Activated CD4-positive, alpha-beta memory T cell treated with anti-CD3 and anti-CD28 coated beads for 36 hours (primary cell): ENCODE measurements at regions of chr10 and their contacts with region 1.

Region 1: DNA sequence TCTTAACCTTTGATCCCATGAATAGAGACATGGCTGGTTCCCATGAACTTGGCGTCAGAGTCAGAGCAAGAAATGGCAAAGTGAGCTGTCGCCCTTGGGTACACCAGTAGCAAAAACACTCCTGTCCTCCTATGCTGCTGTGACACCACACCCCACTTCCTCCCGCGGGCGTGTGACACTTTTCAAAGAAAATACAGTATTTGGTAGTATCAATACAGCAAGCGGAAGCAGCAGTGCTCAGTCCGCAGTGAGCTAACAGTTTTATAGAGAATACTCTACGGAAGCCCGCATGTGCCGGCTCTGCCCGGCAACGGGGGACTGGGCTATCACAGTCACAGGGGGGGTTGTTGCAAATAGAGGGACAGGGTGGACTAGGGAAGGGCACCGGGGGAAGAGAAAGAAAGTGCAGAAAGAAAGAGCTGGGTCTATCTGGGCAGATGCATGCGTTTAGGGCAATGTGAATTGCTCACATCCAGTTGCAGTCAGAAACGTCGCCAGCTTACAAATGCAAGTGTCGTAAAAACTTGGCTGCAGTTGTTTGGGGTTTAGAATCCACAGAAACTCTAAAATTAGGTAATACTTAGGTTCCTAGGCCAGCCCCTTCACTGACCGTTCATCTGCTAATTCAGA is 49.8 kb downstream of the PRKCQ start:
- DNase-seq: peak; percentile 91
- H3K4me3 Mint-ChIP-seq: peak overlapping the region; percentile 82
- H3K27ac Mint-ChIP-seq: peak overlapping the region; percentile 98
- H3K4me1 Mint-ChIP-seq: peaks cover 88% of the 10 kb centered on the region
- H3K27me3 Mint-ChIP-seq: no peaks in the 10 kb centered on the region

Region 2: DNA sequence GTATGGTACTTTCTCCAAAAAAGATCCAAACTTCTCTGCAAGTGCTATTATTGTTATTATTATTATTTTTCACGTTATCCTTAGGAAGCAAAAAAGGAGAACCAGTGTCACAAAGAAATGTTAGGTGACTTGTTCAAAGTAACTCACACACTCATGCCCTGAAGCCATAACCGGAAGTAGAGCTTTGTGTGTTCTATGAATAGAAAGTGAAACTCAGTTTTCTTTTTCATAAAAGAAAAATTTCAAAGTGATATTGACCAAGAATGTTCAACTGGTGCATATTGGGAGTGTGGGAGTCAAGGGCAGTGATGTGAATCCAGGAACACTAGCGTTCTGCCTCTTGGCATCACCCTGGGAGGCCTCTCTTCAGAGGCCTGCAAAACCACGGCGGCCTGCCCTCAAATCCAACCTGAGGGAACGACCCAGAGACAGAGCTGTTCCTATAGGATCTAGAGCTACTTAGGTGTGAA is 56.4 kb before region 1 on chr10:
- CTCF ChIA-PET with region 1: no interaction called
- POLR2A ChIA-PET with region 1: no interaction called
- intact Hi-C with region 1: loop called (anchors 1 kb)
- DNase-seq: peak; percentile 54
- H3K4me3 Mint-ChIP-seq: peak overlapping the region; percentile 73
- H3K27ac Mint-ChIP-seq: peak overlapping the region; percentile 93
- H3K4me1 Mint-ChIP-seq: peaks cover 48% of the 10 kb centered on the region
- H3K27me3 Mint-ChIP-seq: no peaks in the 10 kb centered on the region

Region 3: GRCh38 chr10:6498771-6499170 is 31.6 kb before region 1 on chr10:
- CTCF ChIA-PET with region 1: interaction called, 4 read pairs
- POLR2A ChIA-PET with region 1: interaction called, 10 read pairs
- intact Hi-C with region 1: loop called (anchors 2 kb)
- DNase-seq: peak; percentile 55
- H3K4me3 Mint-ChIP-seq: peak overlapping the region; percentile 36
- H3K27ac Mint-ChIP-seq: peak overlapping the region; percentile 93
- H3K4me1 Mint-ChIP-seq: peaks cover 53% of the 10 kb centered on the region
- H3K27me3 Mint-ChIP-seq: no peaks in the 10 kb centered on the region

Region 4: GRCh38 chr10:6507311-6507710 is 23.0 kb before region 1 on chr10:
- CTCF ChIA-PET with region 1: interaction called, 3 read pairs
- POLR2A ChIA-PET with region 1: interaction called, 10 read pairs
- intact Hi-C with region 1: loop called (anchors 1 kb)
- DNase-seq: peak; percentile 73
- H3K4me3 Mint-ChIP-seq: no peak overlapping the region
- H3K27ac Mint-ChIP-seq: peak overlapping the region; percentile 88
- H3K4me1 Mint-ChIP-seq: peaks cover 76% of the 10 kb centered on the region
- H3K27me3 Mint-ChIP-seq: no peaks in the 10 kb centered on the region

Region 5: DNA sequence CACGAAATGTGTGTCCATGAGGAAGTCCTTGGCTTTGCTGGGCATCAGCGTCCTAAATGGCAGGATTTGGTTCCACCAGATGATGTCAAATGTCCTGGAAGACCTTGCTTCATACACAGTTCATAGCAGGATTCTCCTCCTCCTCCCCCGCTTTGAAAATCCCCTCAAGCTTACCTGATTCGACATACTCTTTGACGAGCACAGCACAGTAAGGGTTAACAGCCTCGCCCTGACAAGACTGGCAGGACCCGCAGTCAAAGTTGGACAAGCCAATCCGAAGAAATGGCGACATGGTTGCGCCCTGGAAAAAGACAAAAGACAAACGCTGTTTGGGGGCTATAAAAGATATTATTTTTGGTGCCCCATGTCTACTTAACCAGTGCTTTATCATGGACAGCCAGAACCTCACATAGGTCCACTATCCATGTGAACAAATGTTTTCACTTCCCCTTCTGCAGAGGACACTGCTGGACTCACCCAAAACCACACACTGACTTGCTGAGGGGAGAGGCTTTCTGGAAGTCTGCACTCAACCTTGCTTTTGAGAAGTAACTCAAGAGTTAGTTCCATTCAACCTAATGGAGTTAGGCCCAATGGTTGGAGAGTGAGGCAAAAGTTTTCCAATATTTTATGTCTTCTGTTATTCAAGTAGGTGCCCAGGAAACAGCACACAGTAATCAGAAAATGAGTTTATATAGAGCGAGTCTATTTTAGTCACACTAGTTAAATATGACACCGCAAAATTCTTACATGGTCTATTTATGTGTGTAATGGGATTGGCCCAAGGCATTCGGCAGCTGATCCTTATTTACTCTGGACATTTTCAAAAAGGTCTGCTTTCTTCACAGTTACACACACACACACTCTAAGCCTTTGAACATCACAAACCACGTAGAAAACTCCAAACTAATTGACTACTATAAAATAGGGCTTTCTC is 15.2 kb before region 1 on chr10:
- CTCF ChIA-PET with region 1: interaction called, 8 read pairs
- POLR2A ChIA-PET with region 1: interaction called, 10 read pairs
- intact Hi-C with region 1: loop called (anchors 1 kb)
- DNase-seq: no peak
- H3K4me3 Mint-ChIP-seq: no peak overlapping the region
- H3K27ac Mint-ChIP-seq: peak overlapping the region; percentile 14
- H3K4me1 Mint-ChIP-seq: peaks cover 85% of the 10 kb centered on the region
- H3K27me3 Mint-ChIP-seq: no peaks in the 10 kb centered on the region

Region 6: DNA sequence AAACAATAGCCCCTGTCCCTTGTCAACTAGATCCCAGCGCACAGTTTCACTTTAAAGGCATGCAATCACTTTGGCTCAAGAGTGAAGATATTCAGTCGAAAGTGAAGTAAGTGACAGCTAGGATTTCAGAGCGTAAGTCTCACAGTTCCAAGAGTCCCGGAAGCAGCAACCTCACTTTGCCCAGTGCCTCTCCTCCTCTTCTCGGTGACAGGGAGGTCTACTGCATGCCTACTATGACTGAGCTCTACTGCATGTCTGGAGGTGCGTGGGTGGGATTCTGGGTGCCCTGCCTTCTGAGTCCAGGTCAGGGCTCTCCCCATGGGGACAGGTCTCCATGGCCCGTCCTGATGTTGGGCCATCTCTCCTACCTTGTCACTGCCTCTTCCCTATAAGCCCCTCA is 32.7 kb after region 1 on chr10:
- CTCF ChIA-PET with region 1: interaction called, 4 read pairs
- POLR2A ChIA-PET with region 1: interaction called, 6 read pairs
- intact Hi-C with region 1: loop called (anchors 1 kb)
- DNase-seq: peak; percentile 86
- H3K4me3 Mint-ChIP-seq: peak overlapping the region; percentile 72
- H3K27ac Mint-ChIP-seq: peak overlapping the region; percentile 91
- H3K4me1 Mint-ChIP-seq: peaks cover 88% of the 10 kb centered on the region
- H3K27me3 Mint-ChIP-seq: no peaks in the 10 kb centered on the region